ENCODE measurements at regions of chr22 and their contacts with region 1.

Region 1: GRCh38 chr22:22959147-22959827 is 71.7 kb downstream of the IGLL5 start:
- DNase-seq: peak; percentile 74 to 89
- ATAC-seq: peak; percentile 56 to 79 (median 72)
- H3K4me3 ChIP-seq: no peak overlapping the region
- H3K4me3 Mint-ChIP-seq: no peak overlapping the region
- H3K27ac ChIP-seq: no peak overlapping the region
- H3K27ac Mint-ChIP-seq: no peak overlapping the region
- H3K4me1 ChIP-seq: peaks cover 5% of the 10 kb centered on the region
- H3K4me1 Mint-ChIP-seq: peaks cover 5 to 9% of the 10 kb centered on the region in 2 donors
- H3K27me3 ChIP-seq: no peaks in the 10 kb centered on the region
- H3K27me3 Mint-ChIP-seq: peaks cover 19 to 39% of the 10 kb centered on the region in 2 donors
- CTCF ChIP-seq: peak; percentile 99

Region 2: DNA sequence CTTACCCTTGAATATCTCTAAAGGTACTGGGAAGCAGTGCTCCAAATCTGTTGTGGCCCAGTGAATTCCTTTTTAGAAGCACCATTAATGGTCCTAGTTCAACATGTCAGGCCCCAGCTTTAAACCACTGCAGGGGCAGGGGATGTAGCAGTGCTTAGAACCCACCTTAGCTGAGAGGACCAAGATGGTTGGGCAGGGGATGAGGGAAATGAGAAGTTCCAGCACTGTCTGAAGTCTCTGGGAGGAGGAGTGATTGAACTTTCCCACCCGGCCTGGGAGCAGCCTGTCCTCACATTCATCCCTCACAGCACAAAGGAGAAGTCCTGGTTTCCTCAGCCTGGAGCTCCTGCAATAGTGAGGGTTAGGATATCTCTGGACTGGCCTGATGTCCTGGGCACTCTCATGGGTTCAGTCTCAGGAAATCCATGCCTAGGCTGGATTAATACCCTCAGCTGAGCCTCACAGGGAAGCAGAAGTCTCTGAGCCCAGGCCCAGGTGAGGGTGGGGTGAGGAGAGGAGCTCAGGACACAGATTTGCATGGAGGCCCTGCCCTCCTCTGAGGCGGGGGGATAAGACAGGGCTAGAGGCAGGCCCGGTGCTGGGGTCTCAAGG is 371.6 kb before region 1 on chr22:
- intact Hi-C with region 1: loop called (anchors 2 kb)
- DNase-seq: no peak
- ATAC-seq: no peak
- H3K4me3 ChIP-seq: no peak overlapping the region
- H3K4me3 Mint-ChIP-seq: no peak overlapping the region
- H3K27ac ChIP-seq: no peak overlapping the region
- H3K27ac Mint-ChIP-seq: no peak overlapping the region
- H3K4me1 ChIP-seq: no peaks in the 10 kb centered on the region
- H3K4me1 Mint-ChIP-seq: no peaks in the 10 kb centered on the region
- H3K27me3 ChIP-seq: peaks cover 3% of the 10 kb centered on the region
- H3K27me3 Mint-ChIP-seq: peaks cover 19 to 37% of the 10 kb centered on the region in 2 donors
- CTCF ChIP-seq: no peak

Region 3: DNA sequence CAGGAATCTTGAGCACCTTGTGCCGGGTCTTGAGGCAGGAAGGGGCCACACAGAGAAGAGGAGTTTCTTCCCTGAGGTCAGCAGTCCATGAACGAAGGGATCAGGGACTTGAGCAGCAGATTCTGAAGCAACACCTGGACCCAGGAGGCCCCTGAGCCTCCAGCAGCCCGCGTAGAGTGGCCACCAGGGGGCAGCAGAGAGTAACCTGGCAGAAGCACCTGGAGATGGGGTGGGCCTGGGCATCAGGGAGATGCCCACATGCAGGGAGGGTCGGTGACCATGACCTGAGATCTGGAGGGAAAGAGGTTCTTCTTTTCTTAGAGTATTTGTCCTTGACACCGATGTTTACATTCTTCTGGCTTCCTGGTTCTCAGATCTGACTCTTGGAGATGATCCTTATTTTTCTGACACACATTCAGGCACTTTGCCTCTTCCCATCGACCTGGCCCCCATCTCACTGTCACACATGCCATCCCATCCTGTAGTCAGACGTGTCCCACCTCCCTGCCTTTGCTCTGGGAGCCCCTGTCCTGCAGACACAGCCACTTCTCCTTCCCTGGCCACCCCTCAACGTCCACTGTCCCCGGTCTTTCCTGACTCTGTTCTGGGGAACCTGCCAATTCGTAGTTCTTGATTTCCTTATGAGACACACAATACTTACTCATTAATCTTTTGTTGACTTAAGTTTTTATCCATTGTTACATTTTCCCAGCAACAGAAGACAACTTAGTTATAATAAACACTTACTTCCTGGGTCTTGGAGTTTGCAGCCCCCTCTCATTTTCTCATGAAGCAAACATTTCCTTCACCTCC is 248.4 kb before region 1 on chr22:
- intact Hi-C with region 1: loop called (anchors 2 kb)
- DNase-seq: peak; percentile 82 to 86
- ATAC-seq: peak; percentile 57 to 82 (median 81)
- H3K4me3 ChIP-seq: no peak overlapping the region
- H3K4me3 Mint-ChIP-seq: peak overlapping the region; percentile 55
- H3K27ac ChIP-seq: no peak overlapping the region
- H3K27ac Mint-ChIP-seq: peak overlapping the region; percentile 8 to 60
- H3K4me1 ChIP-seq: peaks cover 23% of the 10 kb centered on the region
- H3K4me1 Mint-ChIP-seq: peaks cover 0 to 14% of the 10 kb centered on the region in 2 donors
- H3K27me3 ChIP-seq: no peaks in the 10 kb centered on the region
- H3K27me3 Mint-ChIP-seq: no peaks in the 10 kb centered on the region
- CTCF ChIP-seq: peak; percentile 99

Region 4: DNA sequence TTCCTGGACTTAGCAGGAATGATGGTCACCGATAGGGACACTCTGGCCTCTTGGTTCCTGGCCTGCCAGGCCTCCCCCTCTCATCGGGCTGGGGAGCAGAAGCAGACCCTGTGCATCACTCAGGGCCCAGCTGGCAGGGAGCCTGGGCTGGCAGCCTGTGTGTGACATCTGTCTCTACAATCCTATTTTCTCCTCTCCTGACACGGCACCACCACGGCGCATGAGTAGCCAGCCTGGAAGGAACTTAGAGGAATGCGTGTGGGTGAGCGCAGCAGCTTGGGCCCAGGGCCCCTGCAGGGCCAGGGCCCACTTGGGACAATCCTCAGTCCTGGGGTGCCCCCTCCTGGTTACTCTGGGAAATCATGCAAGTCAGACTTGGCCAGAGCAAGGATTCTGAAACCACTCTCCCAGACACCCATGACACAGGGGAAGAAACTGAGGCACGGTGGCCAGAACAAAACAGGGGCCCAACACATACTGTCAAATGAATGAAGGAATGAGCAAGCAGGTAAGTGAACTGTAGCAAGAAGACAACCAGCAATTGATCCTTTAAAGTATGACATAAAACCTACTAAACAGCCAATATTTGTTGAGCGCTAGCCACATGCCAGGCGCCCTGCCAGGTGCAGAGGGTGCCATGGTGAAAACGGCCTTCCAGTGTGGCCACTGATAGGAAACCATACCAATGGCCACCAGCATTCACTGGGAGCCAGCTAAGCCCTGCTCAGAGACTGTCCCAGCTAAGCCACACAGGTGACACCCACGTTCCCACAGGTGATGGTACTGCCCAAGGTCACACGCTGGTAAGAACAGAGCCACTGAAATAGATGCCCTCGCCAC is 169.2 kb after region 1 on chr22:
- intact Hi-C with region 1: loop called (anchors 1 kb)
- DNase-seq: peak; percentile 71 to 86
- ATAC-seq: peak; percentile 83 to 98 (median 96)
- H3K4me3 ChIP-seq: no peak overlapping the region
- H3K4me3 Mint-ChIP-seq: no peak overlapping the region
- H3K27ac ChIP-seq: no peak overlapping the region
- H3K27ac Mint-ChIP-seq: peak overlapping the region in 1 of 2 donors; percentile 75
- H3K4me1 ChIP-seq: peaks cover 10% of the 10 kb centered on the region
- H3K4me1 Mint-ChIP-seq: peaks cover 6 to 7% of the 10 kb centered on the region in 2 donors
- H3K27me3 ChIP-seq: no peaks in the 10 kb centered on the region
- H3K27me3 Mint-ChIP-seq: no peaks in the 10 kb centered on the region
- CTCF ChIP-seq: peak; percentile 81

Region 5: DNA sequence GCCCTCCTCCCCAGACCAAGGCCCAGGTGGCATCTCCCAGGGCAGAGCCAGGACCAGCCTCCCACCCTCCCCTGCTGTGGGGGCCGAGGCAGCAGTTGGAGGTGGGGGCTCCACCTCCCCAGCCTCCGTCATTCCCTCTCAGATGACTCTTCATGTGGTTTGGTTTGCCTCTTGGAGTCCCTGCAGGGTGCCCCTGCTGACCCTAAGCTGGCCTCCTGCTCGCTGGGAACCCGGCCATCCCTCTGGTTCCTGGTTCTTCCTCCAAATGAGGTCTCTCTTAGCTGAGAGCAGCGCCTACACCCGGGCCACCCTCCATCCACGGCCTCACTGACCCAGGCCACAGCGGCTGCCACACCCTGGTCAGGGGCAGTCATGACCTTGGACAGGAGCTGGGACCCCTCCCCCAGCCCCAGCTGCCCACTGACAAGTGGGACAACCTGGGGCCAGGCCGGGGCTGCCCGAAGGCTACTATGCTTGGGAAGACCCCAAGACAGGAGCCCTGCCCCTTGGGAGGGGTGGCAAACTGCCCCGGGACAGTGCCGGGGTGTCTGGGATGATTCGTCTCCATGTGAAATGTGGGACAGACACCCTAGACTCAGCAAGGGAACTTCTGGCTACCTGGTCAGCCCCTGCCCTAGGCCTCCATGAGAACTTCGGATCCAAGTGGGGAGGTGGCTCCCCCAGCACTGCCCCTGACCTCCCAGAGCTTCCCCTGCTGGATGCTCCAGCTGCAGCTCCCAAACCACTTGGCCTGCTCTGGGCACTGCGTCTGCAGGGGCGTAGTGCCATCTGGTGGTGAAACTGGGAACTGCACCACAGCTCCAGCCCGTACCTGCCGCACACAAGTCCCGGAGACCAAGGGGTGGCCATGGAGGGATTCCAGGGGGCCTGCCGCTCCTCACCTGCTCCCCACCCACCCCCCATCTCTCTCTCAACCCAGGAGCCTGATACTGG is 426.3 kb after region 1 on chr22:
- intact Hi-C with region 1: loop called (anchors 1 kb)
- DNase-seq: peak; percentile 80 to 89
- ATAC-seq: peak; percentile 74 to 97 (median 92)
- H3K4me3 ChIP-seq: no peak overlapping the region
- H3K4me3 Mint-ChIP-seq: no peak overlapping the region
- H3K27ac ChIP-seq: no peak overlapping the region
- H3K27ac Mint-ChIP-seq: no peak overlapping the region
- H3K4me1 ChIP-seq: peaks cover 3% of the 10 kb centered on the region
- H3K4me1 Mint-ChIP-seq: peaks cover 6 to 8% of the 10 kb centered on the region in 2 donors
- H3K27me3 ChIP-seq: no peaks in the 10 kb centered on the region
- H3K27me3 Mint-ChIP-seq: peaks cover 0 to 6% of the 10 kb centered on the region in 2 donors
- CTCF ChIP-seq: peak; percentile 96